Naive thymus-derived CD4-positive, alpha-beta T cell (primary cell): ENCODE measurements at regions of chr3 and their contacts with region 1.

Region 1: GRCh38 chr3:33440323-33441232 is at the start of gene UBP1:
- DNase-seq: peak; percentile 90 to 99 (median 97)
- ATAC-seq: peak; percentile 91
- H3K4me3 ChIP-seq: peak within 1 kb of the TSS; percentile 82
- H3K4me3 Mint-ChIP-seq: peak within 1 kb of the TSS; percentile 93 to 100 (median 100)
- H3K27ac ChIP-seq: peak within 1 kb of the TSS; percentile 91
- H3K27ac Mint-ChIP-seq: peak within 1 kb of the TSS; percentile 99 to 100 (median 100)
- H3K4me1 ChIP-seq: peaks cover 30 to 35% of the 10 kb centered on the region in 2 donors
- H3K4me1 Mint-ChIP-seq: peaks cover 28 to 56% (median 53%) of the 10 kb centered on the region in 7 donors
- H3K27me3 ChIP-seq: no peaks in the 10 kb centered on the region
- H3K27me3 Mint-ChIP-seq: no peaks in the 10 kb centered on the region
- total RNA-seq, gene UBP1: 61.4 to 116 (median 86.0) TPM

Region 2: GRCh38 chr3:32106280-32106928 is 1334.2 kb before region 1 on chr3 and contains the start of gene GPD1L:
- CTCF ChIA-PET with region 1: no interaction called
- POLR2A ChIA-PET with region 1: no interaction called
- intact Hi-C with region 1: loop called (anchors 2 kb)
- DNase-seq: peak; percentile 75 to 96 (median 86)
- ATAC-seq: peak; percentile 99
- H3K4me3 ChIP-seq: peak within 1 kb of the TSS; percentile 77
- H3K4me3 Mint-ChIP-seq: peak within 1 kb of the TSS; percentile 86 to 97 (median 94)
- H3K27ac ChIP-seq: peak within 1 kb of the TSS; percentile 68
- H3K27ac Mint-ChIP-seq: peak within 1 kb of the TSS; percentile 77 to 96 (median 82)
- H3K4me1 ChIP-seq: peaks cover 14 to 15% of the 10 kb centered on the region in 2 donors
- H3K4me1 Mint-ChIP-seq: peaks cover 14 to 44% (median 39%) of the 10 kb centered on the region in 7 donors
- H3K27me3 ChIP-seq: no peaks in the 10 kb centered on the region
- H3K27me3 Mint-ChIP-seq: no peaks in the 10 kb centered on the region
- total RNA-seq, gene GPD1L: 14.1 to 23.8 (median 21.4) TPM

Region 3: DNA sequence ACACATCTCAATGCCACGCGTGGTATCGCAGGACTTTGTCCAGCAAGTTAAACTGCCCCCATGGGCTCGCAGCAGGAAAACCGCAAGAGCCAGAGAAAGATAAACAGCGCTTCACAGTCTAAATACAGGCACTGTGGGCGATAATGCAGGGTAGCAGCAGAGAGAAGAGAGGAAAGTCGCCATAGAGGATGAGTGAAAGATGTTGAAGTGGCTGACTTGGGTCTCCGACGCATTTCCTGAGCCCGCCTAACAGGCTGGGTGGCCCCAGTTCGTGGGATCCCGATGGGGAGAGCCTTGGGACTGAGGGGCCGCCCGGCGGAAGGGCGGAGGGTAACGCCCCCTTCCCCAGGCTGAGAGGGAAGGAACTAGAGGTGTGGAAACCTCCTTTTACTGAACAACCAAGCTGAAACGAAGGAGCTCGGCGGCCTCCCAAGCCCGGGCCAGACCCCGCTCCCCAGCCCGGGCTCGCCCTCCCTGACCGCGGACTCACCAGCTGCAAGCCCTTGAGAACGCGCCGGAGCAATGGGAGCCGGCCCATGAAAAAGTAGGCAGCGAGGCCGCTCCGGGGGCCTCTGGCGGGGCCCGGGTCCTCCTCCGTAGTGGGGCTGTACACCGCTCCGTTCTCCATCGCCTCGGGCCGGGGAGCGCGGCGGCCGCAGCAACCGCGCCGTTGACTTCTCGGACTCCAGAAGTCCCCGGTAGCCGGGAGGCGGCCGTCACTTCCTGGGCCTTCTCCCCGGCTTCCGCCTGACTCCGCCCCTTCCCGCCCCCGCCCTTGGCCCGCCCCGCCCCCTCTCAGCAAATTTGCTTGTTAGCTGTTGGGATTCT is 938.2 kb before region 1 on chr3 and contains the start of gene CMTM6:
- CTCF ChIA-PET with region 1: no interaction called
- POLR2A ChIA-PET with region 1: no interaction called
- intact Hi-C with region 1: loop called in 1 of 2 experiments (anchors 2 kb)
- DNase-seq: peak; percentile 49 to 77 (median 70)
- ATAC-seq: peak; percentile 92
- H3K4me3 ChIP-seq: peak within 1 kb of the TSS; percentile 89
- H3K4me3 Mint-ChIP-seq: peak within 1 kb of the TSS; percentile 79 to 97 (median 93)
- H3K27ac ChIP-seq: peak within 1 kb of the TSS; percentile 98
- H3K27ac Mint-ChIP-seq: peak within 1 kb of the TSS; percentile 86 to 98 (median 90)
- H3K4me1 ChIP-seq: peaks cover 6 to 23% of the 10 kb centered on the region in 2 donors
- H3K4me1 Mint-ChIP-seq: peaks cover 28 to 48% (median 43%) of the 10 kb centered on the region in 7 donors
- H3K27me3 ChIP-seq: no peaks in the 10 kb centered on the region
- H3K27me3 Mint-ChIP-seq: peaks cover 0 to 4% (median 0%) of the 10 kb centered on the region in 5 donors
- total RNA-seq, gene CMTM6: 24.1 to 61.1 (median 38.1) TPM

Region 4: GRCh38 chr3:33047842-33048834 is 392.4 kb before region 1 on chr3:
- CTCF ChIA-PET with region 1: no interaction called
- POLR2A ChIA-PET with region 1: interaction called, 3 read pairs
- intact Hi-C with region 1: loop called in 1 of 2 experiments (anchors 2 kb)
- DNase-seq: peak in 8 of 9 donors; percentile 50 to 89 (median 84)
- ATAC-seq: peak; percentile 91
- H3K4me3 ChIP-seq: peak overlapping the region; percentile 28
- H3K4me3 Mint-ChIP-seq: peak overlapping the region; percentile 65 to 90 (median 82)
- H3K27ac ChIP-seq: no peak overlapping the region
- H3K27ac Mint-ChIP-seq: peak overlapping the region; percentile 58 to 98 (median 79)
- H3K4me1 ChIP-seq: peaks cover 60 to 82% of the 10 kb centered on the region in 2 donors
- H3K4me1 Mint-ChIP-seq: peaks cover 53 to 78% (median 69%) of the 10 kb centered on the region in 7 donors
- H3K27me3 ChIP-seq: no peaks in the 10 kb centered on the region
- H3K27me3 Mint-ChIP-seq: no peaks in the 10 kb centered on the region

Region 5: DNA sequence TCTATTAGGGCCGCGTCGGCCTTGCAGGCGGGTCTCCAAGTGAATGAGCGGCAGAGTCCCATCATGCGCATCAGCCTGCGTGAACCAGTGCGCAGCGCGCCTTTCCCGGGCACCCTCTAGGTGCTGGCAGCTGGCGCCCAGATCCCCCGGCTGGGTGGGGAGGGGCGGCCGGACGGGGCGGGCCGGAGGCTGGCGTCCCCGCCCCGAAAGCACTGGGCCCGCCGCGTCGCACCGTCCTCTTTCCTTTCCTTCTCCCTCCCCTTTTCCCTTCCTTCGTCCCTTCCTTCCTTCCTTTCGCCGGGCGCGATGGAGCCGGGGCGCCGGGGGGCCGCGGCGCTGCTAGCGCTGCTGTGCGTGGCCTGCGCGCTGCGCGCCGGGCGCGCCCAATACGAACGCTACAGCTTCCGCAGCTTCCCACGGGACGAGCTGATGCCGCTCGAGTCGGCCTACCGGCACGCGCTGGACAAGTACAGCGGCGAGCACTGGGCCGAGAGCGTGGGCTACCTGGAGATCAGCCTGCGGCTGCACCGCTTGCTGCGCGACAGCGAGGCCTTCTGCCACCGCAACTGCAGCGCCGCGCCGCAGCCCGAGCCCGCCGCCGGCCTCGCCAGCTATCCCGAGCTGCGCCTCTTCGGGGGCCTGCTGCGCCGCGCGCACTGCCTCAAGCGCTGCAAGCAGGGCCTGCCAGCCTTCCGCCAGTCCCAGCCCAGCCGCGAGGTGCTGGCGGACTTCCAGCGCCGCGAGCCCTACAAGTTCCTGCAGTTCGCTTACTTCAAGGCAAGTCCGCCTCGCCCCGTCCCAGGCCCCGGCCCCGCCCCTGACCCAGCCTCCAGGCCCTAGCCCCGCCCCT is 326.6 kb before region 1 on chr3 and contains the start of gene CRTAP:
- CTCF ChIA-PET with region 1: no interaction called
- POLR2A ChIA-PET with region 1: no interaction called
- intact Hi-C with region 1: loop called (anchors 1 to 2 kb)
- DNase-seq: peak; percentile 69 to 86 (median 79)
- ATAC-seq: peak; percentile 92
- H3K4me3 ChIP-seq: peak within 1 kb of the TSS; percentile 82
- H3K4me3 Mint-ChIP-seq: peak within 1 kb of the TSS; percentile 88 to 95 (median 92)
- H3K27ac ChIP-seq: peak within 1 kb of the TSS; percentile 69
- H3K27ac Mint-ChIP-seq: peak within 1 kb of the TSS; percentile 75 to 91 (median 85)
- H3K4me1 ChIP-seq: peaks cover 17 to 23% of the 10 kb centered on the region in 2 donors
- H3K4me1 Mint-ChIP-seq: peaks cover 23 to 52% (median 37%) of the 10 kb centered on the region in 7 donors
- H3K27me3 ChIP-seq: no peaks in the 10 kb centered on the region
- H3K27me3 Mint-ChIP-seq: no peaks in the 10 kb centered on the region
- total RNA-seq, gene CRTAP: 27.1 to 86.1 (median 46.4) TPM

Region 6: DNA sequence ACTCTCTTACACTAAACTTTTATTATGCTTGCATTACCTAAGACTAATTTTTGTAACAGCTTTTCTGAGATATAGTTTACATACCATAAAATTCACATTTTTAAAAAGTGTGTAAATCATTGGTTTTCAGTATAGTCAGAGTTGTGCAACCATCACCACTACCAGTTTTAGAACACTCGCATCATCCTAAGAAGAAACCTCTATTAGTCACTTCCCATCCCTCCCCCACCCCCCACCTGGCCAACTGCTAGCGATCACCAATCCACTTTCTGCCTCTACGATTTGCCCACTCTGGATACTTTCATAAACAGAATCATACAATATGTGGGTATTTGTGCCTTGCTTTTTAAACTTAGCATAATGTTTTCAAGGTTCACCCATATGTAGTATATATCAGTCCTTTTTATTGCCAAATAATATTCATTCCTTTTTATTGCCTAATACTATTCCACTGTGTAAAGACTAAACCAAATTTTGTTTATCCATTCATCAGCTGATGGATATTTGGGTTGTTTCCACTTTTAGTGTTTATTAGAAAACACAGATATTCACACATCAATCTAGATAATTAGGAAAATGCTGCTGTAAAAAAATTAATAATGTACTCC is 23.4 kb before region 1 on chr3:
- CTCF ChIA-PET with region 1: interaction called, 3 read pairs
- POLR2A ChIA-PET with region 1: no interaction called
- intact Hi-C with region 1: loop called in 1 of 2 experiments (anchors 2 kb)
- DNase-seq: no peak
- ATAC-seq: no peak
- H3K4me3 ChIP-seq: no peak overlapping the region
- H3K4me3 Mint-ChIP-seq: no peak overlapping the region
- H3K27ac ChIP-seq: no peak overlapping the region
- H3K27ac Mint-ChIP-seq: peak overlapping the region in 4 of 9 donors; percentile 6 to 47 (median 32)
- H3K4me1 ChIP-seq: no peaks in the 10 kb centered on the region
- H3K4me1 Mint-ChIP-seq: peaks cover 3 to 15% (median 10%) of the 10 kb centered on the region in 7 donors
- H3K27me3 ChIP-seq: no peaks in the 10 kb centered on the region
- H3K27me3 Mint-ChIP-seq: no peaks in the 10 kb centered on the region

Region 7: GRCh38 chr3:33717866-33718594 is 277.5 kb after region 1 on chr3 and contains the start of gene CLASP2:
- CTCF ChIA-PET with region 1: no interaction called
- POLR2A ChIA-PET with region 1: interaction called, 15 read pairs
- intact Hi-C with region 1: loop called (anchors 1 kb)
- DNase-seq: peak; percentile 77 to 89 (median 86)
- ATAC-seq: peak; percentile 90
- H3K4me3 ChIP-seq: peak within 1 kb of the TSS; percentile 81
- H3K4me3 Mint-ChIP-seq: peak within 1 kb of the TSS in 5 of 10 donors; percentile 89 to 99 (median 97)
- H3K27ac ChIP-seq: peak within 1 kb of the TSS; percentile 91
- H3K27ac Mint-ChIP-seq: peak within 1 kb of the TSS in 7 of 9 donors; percentile 90 to 100 (median 97)
- H3K4me1 ChIP-seq: peaks cover 11 to 17% of the 10 kb centered on the region in 2 donors
- H3K4me1 Mint-ChIP-seq: peaks cover 0 to 17% (median 11%) of the 10 kb centered on the region in 7 donors
- H3K27me3 ChIP-seq: no peaks in the 10 kb centered on the region
- H3K27me3 Mint-ChIP-seq: peaks cover 0 to 10% (median 0%) of the 10 kb centered on the region in 5 donors
- total RNA-seq, gene CLASP2: 44.2 to 83.8 (median 79.2) TPM

Region 8: GRCh38 chr3:33980252-33980651 is 539.7 kb after region 1 on chr3:
- CTCF ChIA-PET with region 1: no interaction called
- POLR2A ChIA-PET with region 1: no interaction called
- intact Hi-C with region 1: no loop called
- DNase-seq: no peak
- ATAC-seq: no peak
- H3K4me3 ChIP-seq: no peak overlapping the region
- H3K4me3 Mint-ChIP-seq: no peak overlapping the region
- H3K27ac ChIP-seq: no peak overlapping the region
- H3K27ac Mint-ChIP-seq: no peak overlapping the region
- H3K4me1 ChIP-seq: no peaks in the 10 kb centered on the region
- H3K4me1 Mint-ChIP-seq: peaks cover 0 to 13% (median 0%) of the 10 kb centered on the region in 7 donors
- H3K27me3 ChIP-seq: no peaks in the 10 kb centered on the region
- H3K27me3 Mint-ChIP-seq: peaks cover 0 to 9% (median 6%) of the 10 kb centered on the region in 5 donors